Left ventricle myocardium inferior (tissue), 1 donor: ENCODE measurements at regions of chr13 and their contacts with region 1.

Region 1: GRCh38 chr13:51452361-51453206 is at the start of gene INTS6:
- DNase-seq: peak; percentile 98
- H3K4me3 ChIP-seq: peak within 1 kb of the TSS; percentile 95
- H3K27ac ChIP-seq: peak within 1 kb of the TSS; percentile 99
- H3K4me1 ChIP-seq: peaks cover 47% of the 10 kb centered on the region
- H3K27me3 ChIP-seq: no peaks in the 10 kb centered on the region
- CTCF ChIP-seq: no peak
- total RNA-seq, gene INTS6: 23.1 TPM

Region 2: GRCh38 chr13:51112771-51113170 is 339.8 kb before region 1 on chr13:
- intact Hi-C with region 1: no loop called
- DNase-seq: no peak
- H3K4me3 ChIP-seq: no peak overlapping the region
- H3K27ac ChIP-seq: no peak overlapping the region
- H3K4me1 ChIP-seq: no peaks in the 10 kb centered on the region
- H3K27me3 ChIP-seq: peaks cover 51% of the 10 kb centered on the region
- CTCF ChIP-seq: no peak

Region 3: DNA sequence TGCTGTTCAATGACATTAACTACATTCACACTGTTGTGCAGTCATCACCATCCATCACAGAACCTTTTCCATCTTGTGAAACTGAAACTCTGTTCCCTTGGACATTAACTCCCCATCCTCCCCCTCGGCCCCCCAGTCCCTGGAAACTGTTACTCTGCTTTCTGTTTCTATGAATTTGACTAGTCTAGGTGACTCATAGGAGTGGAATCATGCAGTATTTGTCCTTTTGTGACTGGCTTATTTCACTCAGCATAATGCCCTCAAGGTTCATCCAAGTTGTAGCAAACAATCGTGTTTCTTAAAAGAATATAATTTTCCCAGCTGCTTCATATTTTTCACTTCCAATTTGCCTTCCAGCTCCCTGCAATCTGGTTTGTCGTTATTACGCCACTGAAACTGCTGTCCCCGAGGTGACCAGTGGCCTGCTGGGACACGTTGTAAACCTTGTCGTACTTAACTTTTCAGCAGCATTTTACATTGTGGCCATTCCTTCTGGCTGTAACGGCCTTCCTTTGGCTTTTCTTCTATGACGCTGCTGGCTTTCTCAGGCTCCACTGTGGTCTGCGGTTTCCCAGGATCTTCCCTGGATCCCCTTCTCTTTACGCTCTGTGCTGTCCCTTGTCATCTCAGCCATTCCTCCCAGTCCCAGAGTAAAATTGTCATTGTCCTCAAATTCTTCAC is 277.4 kb after region 1 on chr13:
- intact Hi-C with region 1: loop called (anchors 10 kb)
- DNase-seq: no peak
- H3K4me3 ChIP-seq: peak overlapping the region; percentile 9
- H3K27ac ChIP-seq: peak overlapping the region; percentile 77
- H3K4me1 ChIP-seq: peaks cover 42% of the 10 kb centered on the region
- H3K27me3 ChIP-seq: no peaks in the 10 kb centered on the region
- CTCF ChIP-seq: no peak